CD8-positive, alpha-beta T cell (primary cell): ENCODE measurements at regions of chr17 and their contacts with region 1.

Region 1: GRCh38 chr17:45894022-45894784 is at the start of gene MAPT:
- DNase-seq: peak; percentile 54 to 91 (median 79)
- ATAC-seq: peak; percentile 83
- H3K4me3 ChIP-seq: peak within 1 kb of the TSS; percentile 64 to 90
- H3K4me3 Mint-ChIP-seq: peak within 1 kb of the TSS; percentile 89
- H3K27ac ChIP-seq: no peak within 1 kb of the TSS
- H3K27ac Mint-ChIP-seq: no peak within 1 kb of the TSS
- H3K4me1 ChIP-seq: peaks cover 24% of the 10 kb centered on the region
- H3K4me1 Mint-ChIP-seq: peaks cover 20% of the 10 kb centered on the region
- H3K27me3 ChIP-seq: peaks cover 19 to 30% of the 10 kb centered on the region in 2 experiments
- H3K27me3 Mint-ChIP-seq: peaks cover 18% of the 10 kb centered on the region
- CTCF ChIP-seq: peak; percentile 81
- total RNA-seq, gene MAPT: 0.46 to 0.86 TPM

Region 2: DNA sequence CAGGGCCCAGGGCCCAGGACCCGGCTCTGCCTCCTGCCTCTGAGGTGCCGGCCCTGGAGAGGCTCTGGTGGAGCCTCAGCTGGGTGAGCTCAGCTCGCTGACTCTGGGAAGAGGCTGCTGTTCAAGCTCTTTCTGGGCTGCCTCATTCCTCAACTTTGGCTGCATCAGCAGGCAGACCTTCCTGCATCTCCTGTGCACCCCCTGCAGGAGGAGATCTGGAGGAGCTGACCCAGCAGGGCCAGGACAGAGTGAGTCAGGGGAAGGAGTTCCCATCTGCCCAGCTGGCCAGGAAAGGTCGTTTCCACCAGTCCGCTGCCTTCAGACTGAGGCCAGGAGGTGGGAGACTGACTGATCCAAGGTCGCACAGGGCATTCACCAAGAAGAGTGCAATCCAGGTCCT is 99.4 kb before region 1 on chr17:
- CTCF ChIA-PET with region 1: no interaction called
- POLR2A ChIA-PET with region 1: no interaction called
- intact Hi-C with region 1: no loop called
- DNase-seq: no peak
- ATAC-seq: no peak
- H3K4me3 ChIP-seq: no peak overlapping the region
- H3K4me3 Mint-ChIP-seq: no peak overlapping the region
- H3K27ac ChIP-seq: no peak overlapping the region
- H3K27ac Mint-ChIP-seq: no peak overlapping the region
- H3K4me1 ChIP-seq: no peaks in the 10 kb centered on the region
- H3K4me1 Mint-ChIP-seq: no peaks in the 10 kb centered on the region
- H3K27me3 ChIP-seq: peaks cover 0 to 11% of the 10 kb centered on the region in 2 experiments
- H3K27me3 Mint-ChIP-seq: peaks cover 43% of the 10 kb centered on the region
- CTCF ChIP-seq: no peak

Region 3: GRCh38 chr17:45846223-45846622 is 48.0 kb before region 1 on chr17:
- CTCF ChIA-PET with region 1: no interaction called
- POLR2A ChIA-PET with region 1: no interaction called
- intact Hi-C with region 1: no loop called
- DNase-seq: peak in 1 of 9 experiments; percentile 10
- ATAC-seq: no peak
- H3K4me3 ChIP-seq: no peak overlapping the region
- H3K4me3 Mint-ChIP-seq: no peak overlapping the region
- H3K27ac ChIP-seq: no peak overlapping the region
- H3K27ac Mint-ChIP-seq: no peak overlapping the region
- H3K4me1 ChIP-seq: no peaks in the 10 kb centered on the region
- H3K4me1 Mint-ChIP-seq: no peaks in the 10 kb centered on the region
- H3K27me3 ChIP-seq: no peaks in the 10 kb centered on the region
- H3K27me3 Mint-ChIP-seq: peaks cover 8% of the 10 kb centered on the region
- CTCF ChIP-seq: no peak

Region 4: GRCh38 chr17:46266656-46267544 is 372.7 kb after region 1 on chr17:
- CTCF ChIA-PET with region 1: no interaction called
- POLR2A ChIA-PET with region 1: no interaction called
- intact Hi-C with region 1: loop called in 1 of 2 experiments (anchors 5 kb)
- DNase-seq: peak; percentile 77 to 94 (median 85)
- ATAC-seq: peak; percentile 53
- H3K4me3 ChIP-seq: peak overlapping the region; percentile 85 to 97
- H3K4me3 Mint-ChIP-seq: peak overlapping the region; percentile 87
- H3K27ac ChIP-seq: peak overlapping the region; percentile 72 to 83
- H3K27ac Mint-ChIP-seq: peak overlapping the region; percentile 91
- H3K4me1 ChIP-seq: peaks cover 30% of the 10 kb centered on the region
- H3K4me1 Mint-ChIP-seq: peaks cover 29% of the 10 kb centered on the region
- H3K27me3 ChIP-seq: no peaks in the 10 kb centered on the region
- H3K27me3 Mint-ChIP-seq: no peaks in the 10 kb centered on the region
- CTCF ChIP-seq: no peak